ENCODE measurements at regions of chr7 and their contacts with region 1.

Region 1: GRCh38 chr7:105399043-105399725 is 10.5 kb upstream of the SRPK2 start:
- DNase-seq: peak; percentile 75
- H3K4me3 ChIP-seq: no peak overlapping the region
- H3K27ac ChIP-seq: no peak overlapping the region
- H3K4me1 ChIP-seq: peaks cover 12% of the 10 kb centered on the region
- H3K27me3 ChIP-seq: no peaks in the 10 kb centered on the region
- CTCF ChIP-seq: peak in 1 of 2 donors; percentile 29
- POLR2A ChIP-seq: no peak

Region 2: DNA sequence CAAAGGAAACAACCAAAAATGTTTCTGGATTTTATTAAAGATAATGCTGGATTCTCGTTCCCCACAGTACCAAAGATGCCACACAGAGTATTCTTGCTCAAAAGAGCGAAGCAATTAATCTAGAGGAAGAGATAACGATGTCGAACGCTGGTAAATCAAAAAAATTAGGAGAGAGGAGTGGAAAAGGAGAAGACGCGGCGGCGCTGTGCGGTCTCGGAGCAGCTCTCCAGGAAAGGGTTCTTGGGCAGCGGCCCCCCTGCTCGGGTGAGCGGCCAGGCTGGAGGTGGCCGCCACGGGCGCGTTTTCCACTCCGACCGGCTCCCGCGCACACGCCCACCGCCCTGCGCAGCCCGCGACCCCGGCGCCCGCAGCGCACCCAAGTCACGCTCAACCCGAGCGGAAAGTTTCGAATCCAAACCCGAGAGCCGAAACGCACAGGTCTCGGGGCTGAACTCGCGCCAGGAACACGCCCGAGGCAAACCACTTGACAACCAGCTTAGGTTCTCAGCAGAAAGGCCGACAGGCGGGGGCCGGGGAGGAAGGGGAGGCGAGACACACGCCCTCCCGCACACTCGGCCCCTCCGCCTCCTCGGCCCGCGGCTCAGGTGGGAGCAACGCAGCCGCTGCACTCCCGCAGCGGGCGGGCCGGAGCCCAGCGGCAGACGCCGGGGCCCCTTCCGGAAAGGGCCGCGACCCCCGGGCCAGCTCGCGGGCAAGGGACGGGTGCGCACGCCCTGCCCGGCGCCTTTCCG is 11.4 kb before region 1 on chr7:
- CTCF ChIA-PET with region 1: interaction called, 22 read pairs
- POLR2A ChIA-PET with region 1: no interaction called
- dilution Hi-C with region 1: no loop called
- intact Hi-C with region 1: no loop called
- DNase-seq: peak; percentile 67
- H3K4me3 ChIP-seq: peak overlapping the region; percentile 49 to 98 (median 78)
- H3K27ac ChIP-seq: peak overlapping the region; percentile 32
- H3K4me1 ChIP-seq: peaks cover 15% of the 10 kb centered on the region
- H3K27me3 ChIP-seq: no peaks in the 10 kb centered on the region
- CTCF ChIP-seq: peak in 1 of 2 donors; percentile 10
- POLR2A ChIP-seq: peak; percentile 15

Region 3: GRCh38 chr7:105429746-105430612 is 30.8 kb after region 1 on chr7:
- CTCF ChIA-PET with region 1: interaction called, 54 read pairs
- POLR2A ChIA-PET with region 1: no interaction called
- dilution Hi-C with region 1: no loop called
- intact Hi-C with region 1: loop called (anchors 1 kb)
- DNase-seq: peak; percentile 83
- H3K4me3 ChIP-seq: no peak overlapping the region
- H3K27ac ChIP-seq: no peak overlapping the region
- H3K4me1 ChIP-seq: no peaks in the 10 kb centered on the region
- H3K27me3 ChIP-seq: no peaks in the 10 kb centered on the region
- CTCF ChIP-seq: peak; percentile 38 to 44
- POLR2A ChIP-seq: no peak

Region 4: GRCh38 chr7:105439174-105439893 is 40.1 kb after region 1 on chr7:
- CTCF ChIA-PET with region 1: interaction called, 10 read pairs
- POLR2A ChIA-PET with region 1: no interaction called
- dilution Hi-C with region 1: no loop called
- intact Hi-C with region 1: loop called (anchors 2 kb)
- DNase-seq: peak; percentile 92
- H3K4me3 ChIP-seq: no peak overlapping the region
- H3K27ac ChIP-seq: peak overlapping the region; percentile 36
- H3K4me1 ChIP-seq: peaks cover 9% of the 10 kb centered on the region
- H3K27me3 ChIP-seq: no peaks in the 10 kb centered on the region
- CTCF ChIP-seq: peak in 1 of 2 donors; percentile 4
- POLR2A ChIP-seq: no peak

Region 5: GRCh38 chr7:105454095-105454747 is 55.0 kb after region 1 on chr7:
- CTCF ChIA-PET with region 1: interaction called, 11 read pairs
- POLR2A ChIA-PET with region 1: no interaction called
- dilution Hi-C with region 1: no loop called
- intact Hi-C with region 1: no loop called
- DNase-seq: no peak
- H3K4me3 ChIP-seq: no peak overlapping the region
- H3K27ac ChIP-seq: no peak overlapping the region
- H3K4me1 ChIP-seq: no peaks in the 10 kb centered on the region
- H3K27me3 ChIP-seq: no peaks in the 10 kb centered on the region
- CTCF ChIP-seq: no peak
- POLR2A ChIP-seq: no peak

Region 6: DNA sequence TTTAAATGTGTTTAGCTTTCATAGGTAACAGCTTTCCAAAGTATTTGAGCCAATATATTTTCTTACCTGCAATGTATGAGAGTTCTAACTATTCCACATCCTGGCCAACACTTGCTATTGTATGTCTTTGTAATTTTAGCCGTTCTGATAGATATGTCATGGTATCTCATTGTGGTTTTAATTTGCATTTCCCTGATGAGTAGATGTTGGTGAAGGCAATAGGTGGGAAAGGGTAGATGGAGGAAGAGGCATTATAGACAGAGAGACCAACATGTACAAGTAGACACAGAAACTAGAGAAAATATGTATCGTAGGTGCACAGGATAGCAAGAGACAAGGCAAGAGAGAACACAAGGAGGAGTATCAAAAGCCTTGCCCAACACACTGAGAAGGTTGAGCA is 1316.5 kb after region 1 on chr7:
- CTCF ChIA-PET with region 1: no interaction called
- POLR2A ChIA-PET with region 1: no interaction called
- dilution Hi-C with region 1: no loop called
- intact Hi-C with region 1: no loop called
- DNase-seq: no peak
- H3K4me3 ChIP-seq: no peak overlapping the region
- H3K27ac ChIP-seq: no peak overlapping the region
- H3K4me1 ChIP-seq: peaks cover 28% of the 10 kb centered on the region
- H3K27me3 ChIP-seq: no peaks in the 10 kb centered on the region
- CTCF ChIP-seq: no peak
- POLR2A ChIP-seq: no peak